ENCODE measurements at regions of chr19 and their contacts with region 1.

Region 1: DNA sequence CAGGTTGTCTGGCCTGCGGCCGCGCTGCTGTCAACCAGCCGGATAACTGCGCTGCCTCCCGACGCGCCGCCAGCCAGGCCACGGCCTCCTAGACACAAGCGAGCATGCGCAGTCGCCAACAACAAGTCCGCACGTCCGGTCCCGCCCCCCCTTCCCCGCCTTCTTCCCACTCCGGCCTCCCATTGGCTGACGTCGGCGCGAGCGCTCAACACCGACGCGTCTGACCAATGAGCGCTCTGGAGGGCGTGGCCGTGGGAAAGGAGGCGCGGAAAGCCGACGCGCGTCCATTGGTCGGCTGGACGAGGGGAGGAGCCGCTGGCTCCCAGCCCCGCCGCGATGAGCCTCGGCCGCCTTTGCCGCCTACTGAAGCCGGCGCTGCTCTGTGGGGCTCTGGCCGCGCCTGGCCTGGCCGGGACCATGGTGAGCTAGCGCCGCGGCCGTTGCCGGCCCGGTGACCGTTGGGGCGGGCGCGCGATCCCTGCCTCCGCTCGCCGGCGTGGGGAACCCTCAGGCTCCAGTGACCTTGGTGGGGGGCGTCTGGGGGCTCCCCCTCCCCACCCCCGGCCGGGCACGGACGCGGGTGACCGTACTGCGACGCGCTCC is at the start of gene GPX4:
- DNase-seq: peak; percentile 100
- H3K4me3 ChIP-seq: peak within 1 kb of the TSS; percentile 77 to 98 (median 94)
- H3K27ac ChIP-seq: peak within 1 kb of the TSS; percentile 98 to 100 (median 100)
- H3K4me1 ChIP-seq: peaks cover 0 to 53% (median 50%) of the 10 kb centered on the region in 4 donors
- H3K27me3 ChIP-seq: no peaks in the 10 kb centered on the region
- CTCF ChIP-seq: no peak
- EP300 ChIP-seq: peak in 1 of 4 donors; percentile 41
- POLR2A ChIP-seq: peak; percentile 82 to 88
- total RNA-seq, gene GPX4: 269 to 433 (median 371) TPM

Region 2: GRCh38 chr19:680287-681028 is 423.4 kb before region 1 on chr19:
- intact Hi-C with region 1: loop called (anchors 5 kb)
- DNase-seq: peak; percentile 100
- H3K4me3 ChIP-seq: peak overlapping the region; percentile 67 to 96 (median 84)
- H3K27ac ChIP-seq: peak overlapping the region; percentile 97 to 100 (median 98)
- H3K4me1 ChIP-seq: peaks cover 0 to 47% (median 41%) of the 10 kb centered on the region in 4 donors
- H3K27me3 ChIP-seq: no peaks in the 10 kb centered on the region
- CTCF ChIP-seq: peak in 1 of 4 experiments; percentile 43
- EP300 ChIP-seq: peak in 1 of 4 donors; percentile 62
- POLR2A ChIP-seq: no peak

Measured in sigmoid colon (tissue), 7 donors.